PC-3 (cell line): ENCODE measurements at regions of chr13 and their contacts with region 1.

Region 1: GRCh38 chr13:89361909-89362308 is 1690.7 kb downstream of the SLITRK5 start:
- DNase-seq: peak; percentile 41
- ATAC-seq: no peak; the same call in 1 of the 2 replicates
- H3K4me3 ChIP-seq: no peak overlapping the region
- H3K27ac ChIP-seq: no peak overlapping the region
- H3K4me1 ChIP-seq: no peaks in the 10 kb centered on the region
- H3K27me3 ChIP-seq: no peaks in the 10 kb centered on the region
- CTCF ChIP-seq: peak; percentile 53

Region 2: GRCh38 chr13:89307278-89307677 is 54.6 kb before region 1 on chr13:
- CTCF ChIA-PET with region 1: no interaction called
- POLR2A ChIA-PET with region 1: interaction called, 19 read pairs
- intact Hi-C with region 1: no loop called
- DNase-seq: no peak
- ATAC-seq: no peak
- H3K4me3 ChIP-seq: no peak overlapping the region
- H3K27ac ChIP-seq: no peak overlapping the region
- H3K4me1 ChIP-seq: peaks cover 8% of the 10 kb centered on the region; the same call in 1 of the 2 replicates
- H3K27me3 ChIP-seq: no peaks in the 10 kb centered on the region
- CTCF ChIP-seq: no peak